ENCODE measurements at regions of chrX and their contacts with region 1.

Region 1: GRCh38 chrX:29478336-29479069 is 736.9 kb upstream of the MAGEB2 start:
- DNase-seq: peak; percentile 36
- ATAC-seq: peak; percentile 100
- H3K4me3 ChIP-seq: 0 out of 4 replicates have a peak overlapping the region, but pooled peaks of 1 of the 2 experiments have one; percentile 4
- H3K27ac ChIP-seq: no peak overlapping the region
- H3K4me1 ChIP-seq: peaks cover 0 to 8% of the 10 kb centered on the region in 2 experiments; a peak in 1 of 4 replicates
- H3K27me3 ChIP-seq: no peaks in the 10 kb centered on the region
- CTCF ChIP-seq: peak; percentile 51 to 89 (median 68); a peak in 5 of 6 replicates
- POLR2A ChIP-seq: no peak
- RAD21 ChIP-seq: peak; percentile 58

Region 2: DNA sequence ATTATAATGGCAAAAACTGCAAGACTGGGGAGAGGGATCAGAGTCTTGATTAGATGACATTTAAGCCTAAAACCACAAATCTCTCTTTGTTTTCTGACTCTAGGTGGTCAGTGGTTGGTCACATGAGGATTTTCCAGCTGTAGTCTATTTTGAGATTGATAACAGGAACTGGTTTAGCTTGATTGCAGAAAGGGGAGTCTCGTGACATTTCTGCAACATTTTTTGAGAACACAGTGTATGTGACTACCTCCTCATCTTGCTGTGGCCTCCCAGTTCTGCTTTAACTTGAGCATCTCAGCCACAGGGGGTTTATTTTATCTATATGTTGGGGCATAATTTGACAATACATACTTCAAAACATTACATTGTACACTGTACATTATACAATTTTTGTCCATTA is 10.4 kb after region 1 on chrX:
- CTCF ChIA-PET with region 1: interaction called, 14 read pairs
- POLR2A ChIA-PET with region 1: no interaction called
- RAD21 ChIA-PET with region 1: no interaction called
- intact Hi-C with region 1: no loop called
- DNase-seq: no peak
- ATAC-seq: no peak
- H3K4me3 ChIP-seq: no peak overlapping the region
- H3K27ac ChIP-seq: no peak overlapping the region
- H3K4me1 ChIP-seq: no peaks in the 10 kb centered on the region
- H3K27me3 ChIP-seq: no peaks in the 10 kb centered on the region
- CTCF ChIP-seq: no peak
- POLR2A ChIP-seq: no peak
- RAD21 ChIP-seq: no peak

Region 3: GRCh38 chrX:30005813-30006212 is 527.3 kb after region 1 on chrX:
- CTCF ChIA-PET with region 1: no interaction called
- POLR2A ChIA-PET with region 1: no interaction called
- RAD21 ChIA-PET with region 1: no interaction called
- intact Hi-C with region 1: no loop called
- DNase-seq: no peak
- ATAC-seq: no peak
- H3K4me3 ChIP-seq: no peak overlapping the region
- H3K27ac ChIP-seq: no peak overlapping the region
- H3K4me1 ChIP-seq: no peaks in the 10 kb centered on the region
- H3K27me3 ChIP-seq: no peaks in the 10 kb centered on the region
- CTCF ChIP-seq: no peak
- POLR2A ChIP-seq: no peak
- RAD21 ChIP-seq: no peak

Region 4: GRCh38 chrX:30181353-30181752 is 702.9 kb after region 1 on chrX:
- CTCF ChIA-PET with region 1: no interaction called
- POLR2A ChIA-PET with region 1: no interaction called
- RAD21 ChIA-PET with region 1: no interaction called
- intact Hi-C with region 1: no loop called
- DNase-seq: no peak
- ATAC-seq: no peak
- H3K4me3 ChIP-seq: no peak overlapping the region
- H3K27ac ChIP-seq: no peak overlapping the region
- H3K4me1 ChIP-seq: no peaks in the 10 kb centered on the region
- H3K27me3 ChIP-seq: no peaks in the 10 kb centered on the region
- CTCF ChIP-seq: no peak
- POLR2A ChIP-seq: no peak
- RAD21 ChIP-seq: no peak

Measured in HCT116 (cell line).